ENCODE measurements at regions of chr2 and their contacts with region 1.

Region 1: GRCh38 chr2:172770887-172771286 is 35.2 kb downstream of the RAPGEF4 start:
- DNase-seq: no peak
- H3K4me3 ChIP-seq: no peak overlapping the region
- H3K27ac ChIP-seq: no peak overlapping the region
- H3K4me1 ChIP-seq: no peaks in the 10 kb centered on the region
- H3K27me3 ChIP-seq: no peaks in the 10 kb centered on the region
- CTCF ChIP-seq: no peak

Region 2: DNA sequence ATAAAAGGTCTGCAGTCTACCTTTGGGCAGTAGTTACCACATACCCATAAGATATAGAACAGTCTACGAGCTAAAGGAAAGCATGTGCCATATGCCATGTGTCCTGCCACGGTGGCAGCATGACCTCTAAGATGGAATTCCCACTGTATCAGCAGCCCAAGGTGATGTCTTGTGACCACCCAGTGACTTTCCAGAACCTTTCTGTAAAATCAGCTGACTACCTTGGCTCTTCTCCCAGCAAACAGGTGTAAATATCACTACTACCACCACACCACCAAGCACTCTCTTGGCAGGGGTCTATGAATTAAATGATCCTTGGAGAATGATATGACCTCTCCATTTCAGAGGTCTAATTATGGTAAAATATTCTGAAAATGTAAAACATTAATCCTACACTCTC is 1436.7 kb before region 1 on chr2:
- CTCF ChIA-PET with region 1: no interaction called
- POLR2A ChIA-PET with region 1: interaction called, 25 read pairs
- intact Hi-C with region 1: no loop called
- DNase-seq: no peak
- H3K4me3 ChIP-seq: no peak overlapping the region
- H3K27ac ChIP-seq: no peak overlapping the region
- H3K4me1 ChIP-seq: peaks cover 6% of the 10 kb centered on the region
- H3K27me3 ChIP-seq: no peaks in the 10 kb centered on the region
- CTCF ChIP-seq: no peak

Region 3: DNA sequence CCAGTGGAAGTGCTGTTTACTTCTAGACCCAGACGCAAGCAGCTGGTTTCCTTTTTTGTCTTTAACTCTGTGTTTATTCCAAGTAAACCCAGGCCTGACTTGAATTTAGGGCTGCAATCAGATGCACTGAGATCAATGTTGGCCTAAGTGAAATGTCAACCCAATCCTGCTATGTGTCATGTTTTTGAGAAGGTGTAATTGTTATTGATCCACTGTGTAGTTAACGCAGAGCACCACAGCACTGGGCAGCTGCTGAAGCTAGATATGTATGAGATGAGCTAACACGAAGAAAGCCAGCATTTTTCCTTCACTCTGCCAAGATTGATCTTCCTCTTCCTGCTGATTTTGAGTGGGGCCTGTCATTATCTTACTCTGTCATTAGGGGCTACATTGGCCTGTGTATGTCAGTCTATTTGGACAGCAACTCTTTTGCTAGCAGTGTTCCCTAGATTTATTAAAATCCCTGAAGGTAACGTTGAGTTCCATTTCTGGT is 704.4 kb before region 1 on chr2:
- CTCF ChIA-PET with region 1: no interaction called
- POLR2A ChIA-PET with region 1: no interaction called
- intact Hi-C with region 1: no loop called
- DNase-seq: no peak
- H3K4me3 ChIP-seq: no peak overlapping the region
- H3K27ac ChIP-seq: no peak overlapping the region
- H3K4me1 ChIP-seq: no peaks in the 10 kb centered on the region
- H3K27me3 ChIP-seq: no peaks in the 10 kb centered on the region
- CTCF ChIP-seq: no peak

Measured in PC-9 (cell line).